ENCODE measurements at regions of chr20 and their contacts with region 1.

Region 1: DNA sequence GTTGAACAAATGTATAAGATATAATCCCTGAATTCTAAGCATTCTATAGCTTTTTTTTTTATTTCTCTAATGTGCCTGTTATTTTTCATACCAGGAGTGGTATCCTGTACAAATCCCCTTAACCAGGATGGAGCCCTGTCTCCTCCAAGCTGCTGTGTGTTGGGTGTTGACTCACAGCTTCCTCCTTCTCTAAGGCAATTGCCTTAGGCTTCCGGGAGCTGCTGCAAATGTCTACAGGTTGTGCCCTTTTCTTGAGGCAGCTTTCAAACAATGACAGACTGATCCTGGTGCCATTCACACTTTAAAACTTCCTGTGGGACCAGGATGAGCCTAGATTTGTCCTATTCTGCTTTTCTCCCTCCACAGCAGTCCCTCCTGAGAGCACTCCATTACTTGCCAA is 173.2 kb downstream of the BTBD3 start:
- DNase-seq: no peak
- H3K4me3 ChIP-seq: no peak overlapping the region
- H3K27ac ChIP-seq: no peak overlapping the region
- H3K4me1 ChIP-seq: no peaks in the 10 kb centered on the region
- H3K27me3 ChIP-seq: no peaks in the 10 kb centered on the region
- CTCF ChIP-seq: no peak
- POLR2A ChIP-seq: no peak

Region 2: GRCh38 chr20:12030470-12030869 is 60.5 kb before region 1 on chr20:
- intact Hi-C with region 1: loop called (anchors 10 kb)
- DNase-seq: no peak
- H3K4me3 ChIP-seq: no peak overlapping the region
- H3K27ac ChIP-seq: no peak overlapping the region
- H3K4me1 ChIP-seq: no peaks in the 10 kb centered on the region
- H3K27me3 ChIP-seq: no peaks in the 10 kb centered on the region
- CTCF ChIP-seq: no peak
- POLR2A ChIP-seq: no peak